GM18951 (cell line): ENCODE measurements at regions of chr11 and their contacts with region 1.

Region 1: DNA sequence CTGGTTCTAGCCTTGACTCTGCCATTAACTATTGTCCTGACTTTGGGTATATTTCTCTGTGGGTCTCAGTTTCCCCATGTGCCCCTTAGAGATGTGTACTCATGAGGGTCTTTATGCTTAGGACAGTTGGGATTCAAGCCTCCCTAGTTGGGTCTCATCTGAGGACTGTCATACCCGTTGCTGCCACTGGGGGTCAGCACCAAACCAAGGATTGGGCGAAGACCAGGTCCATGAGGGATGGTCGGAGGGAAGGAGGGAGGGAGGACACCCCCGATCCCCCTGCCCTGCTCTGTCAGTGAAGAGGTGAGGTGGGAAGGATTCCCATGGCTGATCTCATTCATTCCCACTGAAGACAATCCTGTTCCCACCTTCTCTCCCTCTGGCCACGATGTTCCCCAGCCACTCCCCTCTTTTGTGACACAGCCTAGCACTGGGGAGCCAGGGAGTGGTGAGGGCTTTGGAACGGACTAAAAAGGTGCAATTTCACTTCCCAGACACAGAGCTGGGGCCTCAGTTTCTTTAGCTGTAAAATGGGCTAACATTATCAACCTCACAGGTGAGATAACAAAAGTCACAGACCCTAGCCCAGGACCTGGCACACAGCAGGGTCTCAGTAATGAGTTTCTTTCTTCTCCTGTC is 12.4 kb upstream of the KLHL35 start:
- POLR2A ChIP-seq: no peak

Region 2: GRCh38 chr11:75532200-75533048 is 87.0 kb after region 1 on chr11:
- in situ Hi-C with region 1: loop called (anchors 5 kb)
- POLR2A ChIP-seq: no peak

Region 3: GRCh38 chr11:75562048-75562835 is 116.8 kb after region 1 on chr11 and contains the start of gene SERPINH1:
- in situ Hi-C with region 1: no loop called
- POLR2A ChIP-seq: peak; percentile 83